K562 (cell line): ENCODE measurements at regions of chr14 and their contacts with region 1.

Region 1: GRCh38 chr14:20855652-20856291 is 35.4 kb upstream of the RNASE3 start:
- DNase-seq: peak; percentile 42 to 83 (median 62)
- ATAC-seq: peak; percentile 97
- H3K4me3 ChIP-seq: no peak overlapping the region
- H3K27ac ChIP-seq: no peak overlapping the region
- H3K4me1 ChIP-seq: peaks cover 0 to 4% of the 10 kb centered on the region in 2 experiments; a peak in 2 of 5 replicates
- H3K27me3 ChIP-seq: no peaks in the 10 kb centered on the region
- CTCF ChIP-seq: peak; percentile 75 to 92 (median 80)
- EP300 ChIP-seq: no peak
- POLR2A ChIP-seq: no peak
- RAD21 ChIP-seq: peak; percentile 94 to 96

Region 2: GRCh38 chr14:20690848-20691523 is 164.8 kb before region 1 on chr14:
- CTCF ChIA-PET with region 1: interaction called, 4 read pairs
- POLR2A ChIA-PET with region 1: no interaction called
- in situ Hi-C with region 1: loop called (anchors 5 kb)
- intact Hi-C with region 1: no loop called
- DNase-seq: peak; percentile 41 to 70 (median 52)
- ATAC-seq: peak; percentile 87
- H3K4me3 ChIP-seq: no peak overlapping the region
- H3K27ac ChIP-seq: no peak overlapping the region
- H3K4me1 ChIP-seq: no peaks in the 10 kb centered on the region; a peak in 1 of 5 replicates
- H3K27me3 ChIP-seq: no peaks in the 10 kb centered on the region
- CTCF ChIP-seq: peak; percentile 70 to 79 (median 70)
- EP300 ChIP-seq: no peak
- POLR2A ChIP-seq: no peak
- RAD21 ChIP-seq: peak; percentile 80 to 85

Region 3: GRCh38 chr14:20757965-20758364 is 97.8 kb before region 1 on chr14:
- CTCF ChIA-PET with region 1: interaction called, 15 read pairs
- POLR2A ChIA-PET with region 1: interaction called, 3 read pairs
- in situ Hi-C with region 1: loop called (anchors 10 kb)
- intact Hi-C with region 1: loop called (anchors 1 kb)
- DNase-seq: peak; percentile 40 to 59 (median 42)
- ATAC-seq: peak; percentile 83
- H3K4me3 ChIP-seq: no peak overlapping the region
- H3K27ac ChIP-seq: no peak overlapping the region
- H3K4me1 ChIP-seq: no peaks in the 10 kb centered on the region; a peak in 2 of 5 replicates
- H3K27me3 ChIP-seq: no peaks in the 10 kb centered on the region
- CTCF ChIP-seq: peak; percentile 60 to 67 (median 64)
- EP300 ChIP-seq: no peak
- POLR2A ChIP-seq: no peak
- RAD21 ChIP-seq: peak; percentile 45 to 75

Region 4: DNA sequence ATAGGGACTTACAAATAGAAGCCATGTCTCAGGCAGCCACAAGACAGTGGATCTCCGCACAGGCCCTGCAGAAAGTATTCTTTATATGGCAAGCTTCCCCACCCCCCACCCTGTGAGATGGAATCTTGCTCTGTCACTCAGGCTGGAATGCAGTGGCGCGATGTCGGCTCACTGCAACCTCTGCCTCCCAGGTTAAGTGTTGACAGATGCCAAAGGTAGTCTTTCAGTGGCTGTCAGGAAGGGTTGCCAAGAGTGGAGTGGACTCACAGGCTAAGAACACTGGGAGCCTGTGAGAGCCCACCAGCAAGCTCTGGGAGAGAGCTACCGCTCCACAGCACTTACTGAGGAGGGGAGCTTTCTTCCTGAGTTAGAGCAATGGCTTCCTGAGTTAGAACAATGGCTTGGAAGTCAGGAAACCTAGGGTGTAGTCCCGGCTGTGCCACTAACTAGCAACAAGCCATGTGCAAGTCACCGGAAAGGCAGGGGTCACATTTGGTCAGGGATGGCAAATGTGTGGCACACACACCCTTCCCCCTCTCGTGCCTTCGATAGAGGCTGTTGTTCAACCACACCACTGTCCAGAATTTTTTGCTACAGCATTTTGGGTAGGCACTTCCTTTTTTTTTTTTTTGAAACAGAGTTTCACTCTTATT is 55.8 kb before region 1 on chr14:
- CTCF ChIA-PET with region 1: no interaction called
- POLR2A ChIA-PET with region 1: no interaction called
- in situ Hi-C with region 1: no loop called
- intact Hi-C with region 1: loop called (anchors 1 kb)
- DNase-seq: peak; percentile 23 to 70 (median 38)
- ATAC-seq: peak; percentile 61
- H3K4me3 ChIP-seq: peak overlapping the region; percentile 24
- H3K27ac ChIP-seq: peak overlapping the region; percentile 88
- H3K4me1 ChIP-seq: peaks cover 27 to 66% of the 10 kb centered on the region in 2 experiments
- H3K27me3 ChIP-seq: no peaks in the 10 kb centered on the region
- CTCF ChIP-seq: no peak
- EP300 ChIP-seq: no peak; the same call in 1 of the 2 replicates
- POLR2A ChIP-seq: no peak
- RAD21 ChIP-seq: no peak

Region 5: GRCh38 chr14:20811986-20812975 is 43.5 kb before region 1 on chr14:
- CTCF ChIA-PET with region 1: no interaction called
- POLR2A ChIA-PET with region 1: no interaction called
- in situ Hi-C with region 1: no loop called
- intact Hi-C with region 1: no loop called
- DNase-seq: peak in 1 of 4 experiments; percentile 8
- ATAC-seq: 0 out of 3 replicates have a peak, but pooled peaks have one; percentile 33
- H3K4me3 ChIP-seq: no peak overlapping the region
- H3K27ac ChIP-seq: no peak overlapping the region
- H3K4me1 ChIP-seq: peaks cover 0 to 9% of the 10 kb centered on the region in 2 experiments; a peak in 4 of 5 replicates
- H3K27me3 ChIP-seq: no peaks in the 10 kb centered on the region; a peak in 1 of 5 replicates
- CTCF ChIP-seq: no peak
- EP300 ChIP-seq: no peak
- POLR2A ChIP-seq: no peak
- RAD21 ChIP-seq: no peak

Region 6: DNA sequence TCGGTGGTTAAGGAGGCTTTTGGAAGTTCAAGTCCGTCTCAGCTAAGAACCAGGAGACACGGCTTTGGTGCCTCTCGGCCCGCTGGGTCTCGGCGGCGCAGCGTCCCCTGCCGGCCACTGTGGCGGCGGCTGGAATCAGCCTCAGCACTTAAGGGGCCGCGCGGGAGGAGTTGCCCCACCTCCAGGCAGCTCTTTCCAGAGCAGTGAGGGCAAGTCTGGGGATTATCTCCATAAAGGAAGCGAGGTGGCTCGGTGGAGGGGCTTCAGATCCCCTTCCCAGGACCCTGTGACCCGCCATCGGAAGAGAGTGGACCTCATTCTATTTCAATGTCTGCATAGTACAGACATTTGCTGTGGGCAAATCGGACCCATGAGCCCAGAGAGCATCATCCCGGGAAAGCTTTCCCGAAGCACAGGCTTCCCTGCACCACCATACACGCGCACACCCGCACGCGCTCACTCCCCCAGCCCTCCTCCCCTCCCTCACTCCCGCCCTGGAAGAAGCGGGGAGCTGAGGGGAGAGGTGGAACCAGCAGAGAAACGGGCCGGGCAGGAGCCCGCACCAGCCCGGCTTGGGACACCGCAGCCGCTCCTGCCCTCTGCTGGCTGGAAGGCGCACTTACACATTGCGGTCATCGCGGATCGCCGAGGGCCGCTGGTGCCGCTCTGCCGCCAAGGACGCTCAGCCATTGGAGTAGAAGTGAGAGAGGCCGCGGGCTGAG is 115.4 kb after region 1 on chr14:
- CTCF ChIA-PET with region 1: interaction called, 22 read pairs
- POLR2A ChIA-PET with region 1: no interaction called
- in situ Hi-C with region 1: no loop called
- intact Hi-C with region 1: loop called (anchors 1 kb)
- DNase-seq: peak; percentile 80 to 85 (median 84)
- ATAC-seq: peak; percentile 97
- H3K4me3 ChIP-seq: peak overlapping the region; percentile 48
- H3K27ac ChIP-seq: no peak overlapping the region
- H3K4me1 ChIP-seq: peaks cover 0 to 10% of the 10 kb centered on the region in 2 experiments; a peak in 3 of 5 replicates
- H3K27me3 ChIP-seq: no peaks in the 10 kb centered on the region; a peak in 2 of 5 replicates
- CTCF ChIP-seq: peak; percentile 90 to 94 (median 91)
- EP300 ChIP-seq: no peak
- POLR2A ChIP-seq: no peak
- RAD21 ChIP-seq: peak; percentile 56 to 65

Region 7: GRCh38 chr14:21039585-21040369 is 184.0 kb after region 1 on chr14:
- CTCF ChIA-PET with region 1: interaction called, 11 read pairs
- POLR2A ChIA-PET with region 1: no interaction called
- in situ Hi-C with region 1: no loop called
- intact Hi-C with region 1: loop called (anchors 5 kb)
- DNase-seq: peak in 2 of 4 experiments; percentile 64 to 73
- ATAC-seq: peak; percentile 92
- H3K4me3 ChIP-seq: no peak overlapping the region
- H3K27ac ChIP-seq: no peak overlapping the region
- H3K4me1 ChIP-seq: peaks cover 5 to 25% of the 10 kb centered on the region in 2 experiments; a peak in 4 of 5 replicates
- H3K27me3 ChIP-seq: no peaks in the 10 kb centered on the region
- CTCF ChIP-seq: peak; percentile 62 to 84 (median 75)
- EP300 ChIP-seq: no peak
- POLR2A ChIP-seq: no peak
- RAD21 ChIP-seq: peak; percentile 81 to 89